Heart left ventricle (tissue), 16 donors: ENCODE measurements at regions of chr10 and their contacts with region 1.

Region 1: GRCh38 chr10:84152769-84153168 is 13.5 kb downstream of the GHITM start:
- DNase-seq: no peak
- ATAC-seq: no peak
- H3K4me3 ChIP-seq: no peak overlapping the region
- H3K27ac ChIP-seq: no peak overlapping the region
- H3K4me1 ChIP-seq: no peaks in the 10 kb centered on the region
- H3K27me3 ChIP-seq: no peaks in the 10 kb centered on the region
- CTCF ChIP-seq: no peak
- POLR2A ChIP-seq: no peak

Region 2: DNA sequence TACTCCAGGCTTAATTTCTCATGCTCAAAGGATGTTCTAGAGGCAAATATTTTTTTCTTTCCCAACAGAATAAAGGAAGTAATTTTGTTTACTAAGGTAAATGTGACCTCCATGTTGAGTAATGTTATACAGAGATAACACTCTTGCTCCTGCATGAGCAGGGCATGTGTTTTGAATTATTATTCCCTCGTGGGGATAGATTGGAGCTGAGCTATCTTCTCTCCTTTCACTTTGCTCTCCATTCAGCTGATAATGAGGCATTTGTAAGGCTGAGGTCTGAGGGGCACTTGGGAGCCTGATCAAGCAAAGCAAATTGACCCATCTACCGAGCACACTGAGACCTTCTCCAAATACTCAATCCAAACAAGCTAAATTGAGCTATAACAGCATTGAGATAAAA is 64.1 kb before region 1 on chr10:
- intact Hi-C with region 1: no loop called
- DNase-seq: no peak
- ATAC-seq: peak in 2 of 4 donors; percentile 73 to 87
- H3K4me3 ChIP-seq: no peak overlapping the region
- H3K27ac ChIP-seq: peak overlapping the region in 3 of 12 donors; percentile 6 to 55 (median 40)
- H3K4me1 ChIP-seq: no peaks in the 10 kb centered on the region
- H3K27me3 ChIP-seq: peaks cover 0 to 8% (median 0%) of the 10 kb centered on the region in 9 donors
- CTCF ChIP-seq: no peak
- POLR2A ChIP-seq: no peak

Region 3: DNA sequence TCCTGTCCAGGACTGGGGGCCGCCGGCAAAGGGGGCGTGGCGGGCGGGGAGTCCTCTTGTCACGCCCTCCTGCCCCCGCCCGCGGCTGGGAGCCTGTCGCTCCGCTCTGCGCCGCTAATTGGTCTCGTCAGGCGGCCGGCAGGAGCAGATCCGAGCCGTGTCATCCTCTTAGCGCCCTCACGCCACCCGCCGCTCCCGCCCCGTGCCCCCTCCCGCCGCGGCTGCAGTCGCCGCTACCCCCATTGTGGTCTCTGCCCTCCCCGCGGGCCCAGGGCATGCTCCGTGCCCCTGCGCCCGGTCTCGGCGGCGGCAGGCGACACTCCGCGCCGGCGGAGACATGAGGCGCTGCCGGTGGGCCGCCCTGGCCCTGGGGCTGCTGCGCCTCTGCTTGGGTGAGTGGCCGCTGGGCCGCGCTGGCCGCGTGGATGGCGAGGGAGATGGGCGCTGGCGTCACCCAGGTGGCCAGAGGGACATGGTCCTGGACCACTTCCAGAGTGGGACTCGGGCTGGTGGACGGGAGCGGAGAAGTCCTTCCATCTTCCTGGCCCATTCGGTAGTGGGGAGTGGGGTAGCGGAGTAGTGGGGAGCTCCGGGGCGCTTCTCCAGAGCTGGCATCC is 41.8 kb after region 1 on chr10 and contains the start of gene CDHR1:
- intact Hi-C with region 1: loop called in 1 of 10 experiments (anchors 5 kb)
- DNase-seq: peak in 2 of 5 donors; percentile 21 to 39
- ATAC-seq: peak in 3 of 4 donors; percentile 27 to 73 (median 34)
- H3K4me3 ChIP-seq: peak within 1 kb of the TSS; percentile 28 to 56 (median 50)
- H3K27ac ChIP-seq: no peak within 1 kb of the TSS
- H3K4me1 ChIP-seq: peaks cover 0 to 26% (median 8%) of the 10 kb centered on the region in 12 donors
- H3K27me3 ChIP-seq: peaks cover 9 to 56% (median 23%) of the 10 kb centered on the region in 9 donors
- CTCF ChIP-seq: no peak
- POLR2A ChIP-seq: no peak
- total RNA-seq, gene CDHR1: 0.14 to 1.3 (median 0.43) TPM in 8 of 9 donors, not detected in the other

Region 4: DNA sequence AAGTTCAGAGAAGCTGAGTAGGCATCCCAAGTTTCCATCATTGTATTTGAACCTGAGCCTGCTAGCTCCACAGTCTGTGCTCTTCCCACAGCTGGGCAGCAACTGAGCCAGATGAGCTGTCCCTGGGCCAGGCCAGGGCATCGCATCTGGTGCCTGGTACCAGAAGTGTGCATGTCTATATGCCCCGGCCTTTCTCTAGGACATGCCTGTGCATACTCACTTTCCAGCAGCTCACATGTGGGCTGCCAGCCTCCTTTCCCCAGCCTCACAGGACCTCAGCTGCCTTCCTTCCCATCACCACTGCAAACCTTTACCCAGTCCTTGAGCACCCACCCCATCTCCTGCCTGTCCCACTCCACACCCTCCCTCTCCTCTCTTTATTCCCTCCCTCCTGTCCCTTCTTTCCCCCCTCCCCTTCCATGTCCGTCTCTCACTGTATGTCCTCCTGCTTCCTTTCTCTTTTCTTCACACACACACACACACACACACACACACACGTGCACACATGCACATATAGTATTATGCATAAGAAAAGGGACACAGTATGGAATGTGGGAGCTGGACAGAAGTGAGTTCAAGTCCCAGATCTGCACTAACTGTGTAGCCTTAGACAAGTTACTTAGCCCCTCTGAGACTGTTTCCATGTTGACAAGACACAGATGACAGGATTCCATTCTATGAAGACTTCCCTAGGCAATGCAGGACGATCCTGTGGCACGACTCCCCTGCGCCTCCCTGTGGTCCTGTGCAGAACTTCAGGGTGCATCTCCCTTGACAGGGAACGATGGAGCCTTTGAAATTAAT is 52.5 kb after region 1 on chr10:
- intact Hi-C with region 1: loop called in 5 of 10 experiments (anchors 2 to 5 kb)
- DNase-seq: peak in 4 of 5 donors; percentile 38 to 75 (median 50)
- ATAC-seq: peak; percentile 68 to 78 (median 76)
- H3K4me3 ChIP-seq: no peak overlapping the region
- H3K27ac ChIP-seq: no peak overlapping the region
- H3K4me1 ChIP-seq: no peaks in the 10 kb centered on the region
- H3K27me3 ChIP-seq: peaks cover 0 to 15% (median 0%) of the 10 kb centered on the region in 9 donors
- CTCF ChIP-seq: peak; percentile 50 to 70 (median 61)
- POLR2A ChIP-seq: no peak

Region 5: GRCh38 chr10:84333864-84334451 is 181.2 kb after region 1 on chr10:
- intact Hi-C with region 1: loop called in 1 of 10 experiments (anchors 5 kb)
- DNase-seq: no peak
- ATAC-seq: peak in 1 of 4 donors; percentile 36
- H3K4me3 ChIP-seq: no peak overlapping the region
- H3K27ac ChIP-seq: peak overlapping the region in 1 of 12 donors; percentile 28
- H3K4me1 ChIP-seq: peaks cover 0 to 93% (median 51%) of the 10 kb centered on the region in 12 donors
- H3K27me3 ChIP-seq: no peaks in the 10 kb centered on the region
- CTCF ChIP-seq: no peak
- POLR2A ChIP-seq: no peak

Region 6: DNA sequence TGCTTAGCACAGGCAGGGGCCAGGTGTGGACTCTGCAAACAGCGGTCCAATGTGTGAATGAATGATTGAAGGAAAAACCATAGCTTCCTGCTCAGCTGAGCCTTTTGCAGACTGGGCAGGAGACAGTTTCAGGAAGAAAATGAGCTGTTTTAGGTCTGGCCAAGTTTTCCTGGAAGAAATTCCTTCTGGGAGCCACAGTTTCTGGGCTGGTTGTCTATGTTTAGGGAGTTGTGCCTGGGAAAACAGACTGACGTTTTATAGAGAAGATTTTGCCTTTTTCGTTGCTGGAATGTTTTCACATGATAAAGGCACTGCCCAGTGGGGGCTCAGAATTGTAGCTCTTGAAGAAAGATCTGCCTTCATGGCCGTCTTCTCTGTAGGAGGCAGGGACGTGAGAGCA is 430.7 kb after region 1 on chr10:
- intact Hi-C with region 1: no loop called
- DNase-seq: no peak
- ATAC-seq: no peak
- H3K4me3 ChIP-seq: no peak overlapping the region
- H3K27ac ChIP-seq: no peak overlapping the region
- H3K4me1 ChIP-seq: no peaks in the 10 kb centered on the region
- H3K27me3 ChIP-seq: peaks cover 0 to 9% (median 0%) of the 10 kb centered on the region in 9 donors
- CTCF ChIP-seq: no peak
- POLR2A ChIP-seq: no peak